IMR-90 (cell line): ENCODE measurements at regions of chr12 and their contacts with region 1.

Region 1: GRCh38 chr12:4526923-4527546 is 11.7 kb upstream of the RAD51AP1 start:
- DNase-seq: peak; percentile 16
- ATAC-seq: no peak
- H3K4me3 ChIP-seq: no peak overlapping the region
- H3K27ac ChIP-seq: no peak overlapping the region
- H3K4me1 ChIP-seq: no peaks in the 10 kb centered on the region
- H3K27me3 ChIP-seq: no peaks in the 10 kb centered on the region
- CTCF ChIP-seq: peak; percentile 52
- POLR2A ChIP-seq: no peak
- RAD21 ChIP-seq: peak; percentile 36

Region 2: GRCh38 chr12:4307593-4308333 is 219.3 kb before region 1 on chr12:
- CTCF ChIA-PET with region 1: no interaction called
- POLR2A ChIA-PET with region 1: no interaction called
- dilution Hi-C with region 1: no loop called
- in situ Hi-C with region 1: loop called (anchors 5 kb)
- intact Hi-C with region 1: loop called (anchors 1 kb)
- DNase-seq: peak; percentile 79
- ATAC-seq: peak; percentile 99
- H3K4me3 ChIP-seq: no peak overlapping the region
- H3K27ac ChIP-seq: no peak overlapping the region
- H3K4me1 ChIP-seq: no peaks in the 10 kb centered on the region
- H3K27me3 ChIP-seq: peaks cover 12% of the 10 kb centered on the region
- CTCF ChIP-seq: peak; percentile 76
- POLR2A ChIP-seq: no peak
- RAD21 ChIP-seq: peak; percentile 78

Region 3: DNA sequence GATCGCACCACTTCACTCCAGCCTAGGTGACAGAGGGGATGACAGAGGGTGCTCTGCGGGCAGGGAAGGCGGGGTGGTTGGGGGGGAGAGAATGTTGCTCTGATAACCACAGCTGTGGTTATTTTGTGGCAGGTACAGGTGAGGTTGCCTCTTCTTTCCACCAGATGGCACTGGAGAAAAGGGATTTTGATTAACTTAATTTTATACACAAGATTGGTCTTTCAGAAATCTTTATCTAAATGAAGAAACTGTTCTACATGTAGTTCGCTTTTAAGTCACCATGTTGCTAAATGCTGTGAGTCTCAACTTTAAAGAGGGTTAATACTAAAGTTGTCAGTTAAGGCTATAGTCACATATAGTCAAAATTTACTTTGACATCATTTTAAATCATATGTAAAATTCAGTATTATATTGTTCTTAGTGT is 173.2 kb before region 1 on chr12:
- CTCF ChIA-PET with region 1: no interaction called
- POLR2A ChIA-PET with region 1: no interaction called
- dilution Hi-C with region 1: no loop called
- in situ Hi-C with region 1: no loop called
- intact Hi-C with region 1: loop called (anchors 2 kb)
- DNase-seq: no peak
- ATAC-seq: no peak
- H3K4me3 ChIP-seq: no peak overlapping the region
- H3K27ac ChIP-seq: no peak overlapping the region
- H3K4me1 ChIP-seq: no peaks in the 10 kb centered on the region
- H3K27me3 ChIP-seq: no peaks in the 10 kb centered on the region
- CTCF ChIP-seq: peak; percentile 30; the same call in 1 of the 2 replicates
- POLR2A ChIP-seq: no peak
- RAD21 ChIP-seq: no peak

Region 4: DNA sequence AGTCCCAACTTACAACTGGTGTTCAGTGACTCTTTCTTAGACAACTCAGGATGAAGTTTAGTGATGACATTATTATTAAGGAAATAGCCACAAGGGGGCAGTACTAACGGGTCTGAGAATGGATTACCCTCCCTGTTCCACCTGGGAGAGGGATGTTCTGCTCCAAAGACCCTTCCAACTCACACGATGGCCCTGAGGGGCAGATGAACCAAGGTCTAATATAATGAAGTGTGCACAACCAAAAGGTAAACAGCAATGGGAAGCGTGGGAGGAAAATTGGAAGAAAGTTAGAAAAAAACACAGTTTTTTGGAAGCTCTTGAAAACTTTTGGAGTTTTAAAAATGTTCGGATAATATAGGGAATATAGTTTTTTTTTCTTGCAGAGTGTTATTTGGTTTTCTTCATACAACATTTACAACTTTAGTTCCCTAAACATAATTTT is 105.4 kb before region 1 on chr12:
- CTCF ChIA-PET with region 1: interaction called, 4 read pairs
- POLR2A ChIA-PET with region 1: no interaction called
- dilution Hi-C with region 1: no loop called
- in situ Hi-C with region 1: no loop called
- intact Hi-C with region 1: loop called (anchors 1 kb)
- DNase-seq: peak; percentile 36
- ATAC-seq: peak; percentile 65
- H3K4me3 ChIP-seq: no peak overlapping the region
- H3K27ac ChIP-seq: no peak overlapping the region
- H3K4me1 ChIP-seq: no peaks in the 10 kb centered on the region
- H3K27me3 ChIP-seq: peaks cover 10% of the 10 kb centered on the region
- CTCF ChIP-seq: peak; percentile 56
- POLR2A ChIP-seq: no peak
- RAD21 ChIP-seq: peak; percentile 43

Region 5: GRCh38 chr12:4538207-4539160 is 11.4 kb after region 1 on chr12 and contains the start of gene RAD51AP1:
- CTCF ChIA-PET with region 1: no interaction called
- POLR2A ChIA-PET with region 1: no interaction called
- dilution Hi-C with region 1: no loop called
- in situ Hi-C with region 1: no loop called
- intact Hi-C with region 1: no loop called
- DNase-seq: peak; percentile 97
- ATAC-seq: peak; percentile 100
- H3K4me3 ChIP-seq: peak within 1 kb of the TSS; percentile 97
- H3K27ac ChIP-seq: peak within 1 kb of the TSS; percentile 86
- H3K4me1 ChIP-seq: no peaks in the 10 kb centered on the region
- H3K27me3 ChIP-seq: no peaks in the 10 kb centered on the region
- CTCF ChIP-seq: no peak
- POLR2A ChIP-seq: no peak
- RAD21 ChIP-seq: no peak
- total RNA-seq, gene RAD51AP1: 6.5 and 15.3 TPM in 2 replicates